Heart right ventricle (tissue), 16 donors: ENCODE measurements at regions of chr17 and their contacts with region 1.

Region 1: GRCh38 chr17:39927101-39927928 is at the starts of genes LRRC3C and ORMDL3:
- DNase-seq: peak; percentile 95
- ATAC-seq: peak; percentile 87 to 95 (median 92)
- H3K4me3 ChIP-seq: peak within 1 kb of the TSS; percentile 50 to 85 (median 72)
- H3K27ac ChIP-seq: peak within 1 kb of the TSS; percentile 85 to 98 (median 92)
- H3K4me1 ChIP-seq: peaks cover 6 to 71% (median 58%) of the 10 kb centered on the region in 9 donors
- H3K27me3 ChIP-seq: no peaks in the 10 kb centered on the region
- CTCF ChIP-seq: no peak
- total RNA-seq, gene LRRC3C: not detected
- total RNA-seq, gene ORMDL3: 33.5 to 94.3 (median 66.8) TPM

Region 2: DNA sequence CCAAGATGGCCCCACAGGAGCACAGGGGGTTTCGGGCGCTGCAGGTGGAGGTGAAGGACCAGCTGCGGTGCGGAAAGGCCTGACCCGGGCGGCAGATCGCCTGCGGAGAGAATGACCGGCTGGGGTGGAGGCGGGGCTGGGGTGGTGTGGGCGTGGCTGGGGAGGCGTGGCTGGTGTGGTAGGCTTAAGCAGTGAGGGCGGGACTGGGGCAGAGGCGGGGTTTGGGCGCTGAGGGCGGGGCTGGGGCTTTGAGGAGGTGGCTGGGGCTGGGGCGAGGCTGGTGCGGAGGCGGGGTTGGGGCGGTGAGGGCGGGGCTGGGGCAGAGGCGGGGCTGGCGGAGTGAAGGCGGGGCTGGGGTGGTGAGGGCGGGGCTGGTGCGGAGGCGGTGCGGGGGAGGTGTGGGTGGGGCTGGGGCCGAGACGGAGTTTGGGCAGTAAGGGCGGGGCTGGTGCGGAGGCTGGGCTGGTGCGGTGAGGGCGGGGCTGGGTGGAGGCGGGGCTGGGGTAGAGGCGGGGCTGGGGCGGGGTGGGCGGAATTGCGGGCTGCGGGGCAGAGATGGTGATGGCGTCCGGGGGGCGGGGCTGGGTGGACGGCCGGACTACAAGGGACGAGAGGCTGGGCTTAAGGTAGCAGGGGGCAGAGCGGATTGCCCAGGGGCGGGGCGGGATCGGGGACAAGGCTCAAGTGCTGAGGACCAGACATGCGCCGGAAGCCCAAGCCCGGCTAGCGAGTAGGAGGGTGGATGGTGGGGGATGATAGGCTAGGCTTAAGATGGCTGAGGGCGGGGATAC is 25.6 kb after region 1 on chr17:
- intact Hi-C with region 1: loop called in 4 of 10 experiments (anchors 2 to 5 kb)
- DNase-seq: peak; percentile 99 to 100
- ATAC-seq: peak; percentile 91 to 96 (median 94)
- H3K4me3 ChIP-seq: peak overlapping the region in 9 of 10 donors; percentile 35 to 56 (median 51)
- H3K27ac ChIP-seq: peak overlapping the region in 9 of 10 donors; percentile 54 to 76 (median 63)
- H3K4me1 ChIP-seq: peaks cover 0 to 31% (median 11%) of the 10 kb centered on the region in 9 donors
- H3K27me3 ChIP-seq: no peaks in the 10 kb centered on the region
- CTCF ChIP-seq: no peak

Region 3: GRCh38 chr17:39963829-39964228 is 36.5 kb after region 1 on chr17:
- intact Hi-C with region 1: loop called in 2 of 10 experiments (anchors 5 kb)
- DNase-seq: no peak
- ATAC-seq: no peak
- H3K4me3 ChIP-seq: no peak overlapping the region
- H3K27ac ChIP-seq: no peak overlapping the region
- H3K4me1 ChIP-seq: peaks cover 0 to 27% (median 3%) of the 10 kb centered on the region in 9 donors
- H3K27me3 ChIP-seq: peaks cover 0 to 25% (median 0%) of the 10 kb centered on the region in 7 donors
- CTCF ChIP-seq: no peak